Pancreas (tissue), 10 donors: ENCODE measurements at regions of chr11 and their contacts with region 1.

Region 1: GRCh38 chr11:133149698-133150097 is 382.6 kb downstream of the OPCML start:
- DNase-seq: no peak
- ATAC-seq: no peak
- H3K4me3 ChIP-seq: no peak overlapping the region
- H3K27ac ChIP-seq: no peak overlapping the region
- H3K4me1 ChIP-seq: no peaks in the 10 kb centered on the region
- H3K27me3 ChIP-seq: no peaks in the 10 kb centered on the region
- CTCF ChIP-seq: no peak

Region 2: GRCh38 chr11:133082851-133083488 is 66.7 kb before region 1 on chr11:
- intact Hi-C with region 1: no loop called
- DNase-seq: peak; percentile 38 to 93 (median 78)
- ATAC-seq: peak; percentile 97 to 99 (median 99)
- H3K4me3 ChIP-seq: peak overlapping the region in 3 of 4 donors; percentile 7 to 36 (median 25)
- H3K27ac ChIP-seq: no peak overlapping the region
- H3K4me1 ChIP-seq: peaks cover 0 to 4% (median 0%) of the 10 kb centered on the region in 3 donors
- H3K27me3 ChIP-seq: peaks cover 0 to 35% (median 8%) of the 10 kb centered on the region in 4 donors
- CTCF ChIP-seq: peak; percentile 73 to 94 (median 80)

Region 3: GRCh38 chr11:133202816-133203215 is 53.1 kb after region 1 on chr11:
- intact Hi-C with region 1: loop called in 1 of 3 experiments (anchors 10 kb)
- DNase-seq: no peak
- ATAC-seq: no peak
- H3K4me3 ChIP-seq: no peak overlapping the region
- H3K27ac ChIP-seq: no peak overlapping the region
- H3K4me1 ChIP-seq: no peaks in the 10 kb centered on the region
- H3K27me3 ChIP-seq: peaks cover 0 to under 1% (median 0%) of the 10 kb centered on the region in 4 donors
- CTCF ChIP-seq: no peak